ENCODE measurements at regions of chr6 and their contacts with region 1.

Region 1: GRCh38 chr6:45009576-45009975 is 318.6 kb upstream of the RUNX2 start:
- DNase-seq: no peak
- H3K4me3 Mint-ChIP-seq: no peak overlapping the region
- H3K27ac Mint-ChIP-seq: no peak overlapping the region
- H3K4me1 Mint-ChIP-seq: peaks cover 12% of the 10 kb centered on the region
- H3K27me3 Mint-ChIP-seq: no peaks in the 10 kb centered on the region

Region 2: GRCh38 chr6:44275749-44276648 is 733.6 kb before region 1 on chr6:
- CTCF ChIA-PET with region 1: no interaction called
- intact Hi-C with region 1: no loop called
- DNase-seq: peak; percentile 18
- H3K4me3 Mint-ChIP-seq: no peak overlapping the region
- H3K27ac Mint-ChIP-seq: no peak overlapping the region
- H3K4me1 Mint-ChIP-seq: peaks cover 1% of the 10 kb centered on the region
- H3K27me3 Mint-ChIP-seq: peaks cover 60% of the 10 kb centered on the region

Region 3: GRCh38 chr6:44925100-44925739 is 84.4 kb before region 1 on chr6:
- CTCF ChIA-PET with region 1: no interaction called
- intact Hi-C with region 1: loop called (anchors 2 kb)
- DNase-seq: peak; percentile 36
- H3K4me3 Mint-ChIP-seq: peak overlapping the region; percentile 0
- H3K27ac Mint-ChIP-seq: peak overlapping the region; percentile 16
- H3K4me1 Mint-ChIP-seq: peaks cover 53% of the 10 kb centered on the region
- H3K27me3 Mint-ChIP-seq: no peaks in the 10 kb centered on the region